ENCODE measurements at regions of chr9 and their contacts with region 1.

Region 1: DNA sequence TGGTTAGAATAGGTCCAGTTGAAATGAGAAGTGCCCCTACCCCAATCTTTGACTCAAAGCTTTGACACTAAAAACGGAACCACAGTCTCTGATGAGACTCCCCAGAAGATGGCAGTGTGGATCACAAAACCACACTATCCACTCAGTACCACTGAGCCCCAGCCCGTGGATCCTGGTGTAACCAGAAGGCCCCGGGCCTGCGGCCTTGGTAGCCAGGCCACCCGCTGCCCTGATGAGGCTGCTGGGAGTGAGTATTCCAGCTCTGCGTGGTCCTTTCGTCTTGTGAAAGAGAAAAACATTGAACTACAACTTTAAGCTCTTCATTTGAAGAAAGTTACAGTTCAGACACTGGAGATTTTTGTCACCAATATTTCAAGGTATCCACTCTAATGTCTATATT is 42.2 kb upstream of the FBP1 start:
- DNase-seq: peak; percentile 85 to 86
- H3K4me3 ChIP-seq: no peak overlapping the region
- H3K27ac ChIP-seq: peak overlapping the region; percentile 3 to 52
- H3K4me1 ChIP-seq: peaks cover 0 to 38% (median 12%) of the 10 kb centered on the region in 4 donors
- H3K27me3 ChIP-seq: no peaks in the 10 kb centered on the region
- CTCF ChIP-seq: peak; percentile 73 to 86

Region 2: DNA sequence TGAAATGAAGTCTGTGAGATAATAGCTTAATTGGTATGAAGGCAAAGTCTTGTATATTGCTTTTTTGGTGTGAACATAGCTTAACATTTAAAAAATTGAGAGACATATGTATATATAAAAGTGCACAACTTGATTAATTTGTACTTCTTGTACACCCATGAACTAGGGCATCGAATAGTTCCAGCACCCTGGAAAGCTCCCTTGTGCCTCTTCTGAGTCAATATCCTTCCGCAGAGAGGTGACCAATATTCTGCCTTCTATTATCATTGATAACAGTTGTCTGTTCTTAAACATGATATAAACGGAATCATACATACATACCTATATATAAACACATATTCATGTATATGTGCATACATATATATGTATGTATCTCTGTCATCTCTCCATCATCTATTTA is 919.7 kb before region 1 on chr9:
- intact Hi-C with region 1: no loop called
- DNase-seq: no peak
- H3K4me3 ChIP-seq: no peak overlapping the region
- H3K27ac ChIP-seq: no peak overlapping the region
- H3K4me1 ChIP-seq: no peaks in the 10 kb centered on the region
- H3K27me3 ChIP-seq: peaks cover 0 to 4% of the 10 kb centered on the region in 2 donors
- CTCF ChIP-seq: no peak

Region 3: DNA sequence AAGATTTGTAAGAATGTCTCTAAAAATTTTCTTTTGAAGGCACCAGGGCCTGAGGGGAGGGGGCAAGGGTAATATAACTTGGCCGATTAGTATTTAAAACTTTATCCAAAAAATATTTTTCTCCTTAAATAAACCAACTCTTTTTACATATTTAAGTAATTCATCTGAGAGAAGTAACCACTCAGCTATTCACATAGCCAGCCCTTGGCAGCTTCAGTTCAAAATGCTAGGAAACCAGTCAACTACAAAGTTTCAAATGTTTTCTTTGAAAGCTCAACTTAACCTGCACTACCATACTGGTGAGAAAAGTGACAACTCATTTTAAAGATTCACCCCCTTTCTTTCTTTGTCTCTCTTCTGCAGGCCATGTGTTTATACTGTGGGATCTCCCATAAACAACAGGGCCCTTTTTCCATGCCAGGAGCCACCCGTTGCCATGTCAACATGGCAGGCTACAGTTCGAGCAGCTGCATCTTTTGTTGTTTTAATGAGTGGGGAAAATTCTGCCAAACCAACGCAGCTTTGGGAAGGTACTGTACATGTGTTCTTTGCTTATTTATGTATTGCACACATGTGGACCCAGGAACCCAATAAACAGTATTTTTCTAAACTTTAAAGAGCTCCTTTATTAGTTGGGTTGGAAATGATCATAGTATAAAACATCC is 91.3 kb after region 1 on chr9:
- intact Hi-C with region 1: loop called (anchors 10 kb)
- DNase-seq: no peak
- H3K4me3 ChIP-seq: no peak overlapping the region
- H3K27ac ChIP-seq: peak overlapping the region; percentile 54 to 57
- H3K4me1 ChIP-seq: peaks cover 0 to 19% (median 0%) of the 10 kb centered on the region in 4 donors
- H3K27me3 ChIP-seq: no peaks in the 10 kb centered on the region
- CTCF ChIP-seq: no peak

Region 4: DNA sequence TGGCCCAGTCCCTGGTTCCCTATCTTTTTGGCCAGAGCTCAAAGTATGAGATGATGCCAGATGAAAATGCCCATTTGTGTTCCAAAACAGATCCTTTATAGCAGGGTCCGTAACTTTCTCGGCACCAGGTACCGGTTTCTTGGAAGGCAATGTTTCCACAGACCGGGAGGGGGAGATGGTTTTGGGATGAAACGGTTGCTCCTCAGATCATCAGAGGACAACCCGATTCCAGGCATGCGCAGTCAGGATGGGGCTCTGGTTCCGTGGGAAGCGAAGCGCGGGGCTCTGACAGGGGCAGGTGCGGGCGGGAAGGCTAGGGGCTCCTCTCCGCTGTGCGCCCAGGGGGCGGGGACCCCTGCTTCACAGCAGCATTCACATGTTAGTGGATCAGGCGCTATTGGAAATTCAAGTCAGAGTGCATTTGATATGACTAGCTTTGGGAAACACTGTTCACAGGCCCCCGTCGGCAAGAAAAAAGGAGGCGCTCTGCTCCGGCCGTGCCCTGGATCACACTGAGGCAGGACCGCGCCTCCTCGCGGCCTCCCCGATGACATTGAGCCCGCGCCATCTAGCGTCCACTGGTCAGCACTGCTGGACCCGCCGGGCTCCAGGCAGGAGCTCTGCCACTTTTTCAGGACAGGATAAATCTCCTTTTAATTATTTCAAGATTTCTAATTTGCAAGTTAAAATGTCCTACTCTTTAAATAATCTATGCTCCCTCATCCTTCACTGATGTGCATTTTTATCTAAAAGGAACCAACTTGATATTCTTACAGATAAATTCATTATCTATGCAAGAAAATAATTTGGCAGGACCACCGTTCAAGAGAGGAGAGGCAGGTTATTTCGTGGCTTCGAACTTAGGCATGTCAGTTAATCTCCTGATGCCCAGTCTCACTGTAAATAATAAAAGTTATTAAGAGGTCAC is 446.0 kb after region 1 on chr9:
- intact Hi-C with region 1: loop called (anchors 5 kb)
- DNase-seq: peak; percentile 92
- H3K4me3 ChIP-seq: peak overlapping the region; percentile 43 to 51
- H3K27ac ChIP-seq: peak overlapping the region; percentile 63 to 70
- H3K4me1 ChIP-seq: peaks cover 0 to 38% (median 14%) of the 10 kb centered on the region in 4 donors
- H3K27me3 ChIP-seq: no peaks in the 10 kb centered on the region
- CTCF ChIP-seq: peak; percentile 95 to 98

Measured in tibial artery (tissue), 4 donors.